ENCODE measurements at regions of chr6 and their contacts with region 1.

Region 1: GRCh38 chr6:4155848-4156466 is 20.6 kb upstream of the ECI2 start:
- DNase-seq: no peak
- H3K4me3 ChIP-seq: no peak overlapping the region
- H3K27ac ChIP-seq: no peak overlapping the region
- H3K4me1 ChIP-seq: peaks cover 0 to 16% (median 2%) of the 10 kb centered on the region in 6 donors
- H3K27me3 ChIP-seq: peaks cover 0 to 4% (median 0%) of the 10 kb centered on the region in 7 donors
- CTCF ChIP-seq: peak; percentile 60 to 90 (median 82)
- POLR2A ChIP-seq: no peak

Region 2: GRCh38 chr6:4055420-4056041 is 100.4 kb before region 1 on chr6:
- intact Hi-C with region 1: loop called (anchors 5 kb)
- DNase-seq: no peak
- H3K4me3 ChIP-seq: no peak overlapping the region
- H3K27ac ChIP-seq: no peak overlapping the region
- H3K4me1 ChIP-seq: peaks cover 0 to 9% (median 0%) of the 10 kb centered on the region in 6 donors
- H3K27me3 ChIP-seq: no peaks in the 10 kb centered on the region
- CTCF ChIP-seq: peak in 4 of 11 experiments; percentile 7 to 34 (median 26)
- POLR2A ChIP-seq: no peak

Region 3: GRCh38 chr6:4322846-4323309 is 166.9 kb after region 1 on chr6:
- intact Hi-C with region 1: no loop called
- DNase-seq: no peak
- H3K4me3 ChIP-seq: no peak overlapping the region
- H3K27ac ChIP-seq: no peak overlapping the region
- H3K4me1 ChIP-seq: peaks cover 5 to 29% (median 16%) of the 10 kb centered on the region in 6 donors
- H3K27me3 ChIP-seq: no peaks in the 10 kb centered on the region
- CTCF ChIP-seq: no peak
- POLR2A ChIP-seq: no peak

Region 4: GRCh38 chr6:5219011-5219691 is 1063.2 kb after region 1 on chr6:
- intact Hi-C with region 1: no loop called
- DNase-seq: no peak
- H3K4me3 ChIP-seq: no peak overlapping the region
- H3K27ac ChIP-seq: no peak overlapping the region
- H3K4me1 ChIP-seq: peaks cover 0 to 14% (median 7%) of the 10 kb centered on the region in 6 donors
- H3K27me3 ChIP-seq: no peaks in the 10 kb centered on the region
- CTCF ChIP-seq: no peak
- POLR2A ChIP-seq: no peak